Uterus (tissue), 4 donors: ENCODE measurements at regions of chr11 and their contacts with region 1.

Region 1: GRCh38 chr11:128172046-128172878 is 415.1 kb downstream of the ETS1 start:
- DNase-seq: peak; percentile 79 to 81
- H3K4me3 ChIP-seq: no peak overlapping the region
- H3K27ac ChIP-seq: no peak overlapping the region
- H3K4me1 ChIP-seq: no peaks in the 10 kb centered on the region
- H3K27me3 ChIP-seq: no peaks in the 10 kb centered on the region
- CTCF ChIP-seq: peak; percentile 70 to 85 (median 78)
- POLR2A ChIP-seq: no peak

Region 2: DNA sequence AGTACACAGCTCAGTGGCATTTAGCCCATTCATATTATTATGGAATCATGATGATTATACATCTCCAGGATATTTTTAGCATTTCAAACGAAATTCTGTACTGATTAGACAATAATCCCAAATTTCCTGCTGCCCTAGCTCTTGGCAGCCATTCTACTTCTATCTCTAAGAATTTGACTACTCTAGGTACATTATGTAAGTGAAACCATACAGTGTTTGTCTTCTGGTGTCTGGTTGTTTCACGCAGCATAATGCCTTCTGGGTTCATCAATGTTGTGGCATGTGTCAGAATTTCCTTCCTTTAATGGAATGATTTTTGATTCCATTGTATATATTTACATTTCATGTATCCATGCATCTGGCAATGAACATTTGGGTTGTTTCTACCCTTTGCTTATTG is 102.6 kb before region 1 on chr11:
- intact Hi-C with region 1: no loop called
- DNase-seq: no peak
- H3K4me3 ChIP-seq: no peak overlapping the region
- H3K27ac ChIP-seq: no peak overlapping the region
- H3K4me1 ChIP-seq: no peaks in the 10 kb centered on the region
- H3K27me3 ChIP-seq: no peaks in the 10 kb centered on the region
- CTCF ChIP-seq: no peak
- POLR2A ChIP-seq: no peak

Region 3: DNA sequence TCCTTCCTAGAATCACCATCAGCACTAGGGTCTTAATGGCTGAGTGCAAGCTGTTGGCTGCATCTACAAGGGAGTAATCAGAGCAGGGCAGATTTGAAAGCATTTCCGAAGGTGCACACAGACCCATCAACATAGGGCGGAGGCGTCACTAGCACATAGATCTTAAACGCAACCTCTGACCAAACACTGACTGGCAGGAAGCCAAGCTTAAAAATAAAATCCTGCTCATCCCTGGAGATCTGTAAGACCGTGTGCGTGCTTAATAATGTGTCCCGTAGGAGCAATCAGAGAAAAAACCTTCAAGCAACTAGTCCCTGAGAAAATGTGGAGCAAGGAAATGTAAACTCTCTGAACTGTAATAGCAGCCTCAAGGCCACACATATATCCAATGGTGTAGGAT is 55.4 kb before region 1 on chr11:
- intact Hi-C with region 1: no loop called
- DNase-seq: no peak
- H3K4me3 ChIP-seq: no peak overlapping the region
- H3K27ac ChIP-seq: no peak overlapping the region
- H3K4me1 ChIP-seq: no peaks in the 10 kb centered on the region
- H3K27me3 ChIP-seq: no peaks in the 10 kb centered on the region
- CTCF ChIP-seq: no peak
- POLR2A ChIP-seq: no peak

Region 4: GRCh38 chr11:128624269-128625175 is 452.3 kb after region 1 on chr11:
- intact Hi-C with region 1: loop called (anchors 10 kb)
- DNase-seq: no peak
- H3K4me3 ChIP-seq: no peak overlapping the region
- H3K27ac ChIP-seq: no peak overlapping the region
- H3K4me1 ChIP-seq: no peaks in the 10 kb centered on the region
- H3K27me3 ChIP-seq: no peaks in the 10 kb centered on the region
- CTCF ChIP-seq: no peak
- POLR2A ChIP-seq: no peak

Region 5: GRCh38 chr11:128831174-128832120 is 659.2 kb after region 1 on chr11:
- intact Hi-C with region 1: loop called (anchors 5 kb)
- DNase-seq: peak; percentile 77 to 80
- H3K4me3 ChIP-seq: no peak overlapping the region
- H3K27ac ChIP-seq: no peak overlapping the region
- H3K4me1 ChIP-seq: no peaks in the 10 kb centered on the region
- H3K27me3 ChIP-seq: no peaks in the 10 kb centered on the region
- CTCF ChIP-seq: peak; percentile 72 to 87 (median 80)
- POLR2A ChIP-seq: no peak